ENCODE measurements at regions of chr9 and their contacts with region 1.

Region 1: DNA sequence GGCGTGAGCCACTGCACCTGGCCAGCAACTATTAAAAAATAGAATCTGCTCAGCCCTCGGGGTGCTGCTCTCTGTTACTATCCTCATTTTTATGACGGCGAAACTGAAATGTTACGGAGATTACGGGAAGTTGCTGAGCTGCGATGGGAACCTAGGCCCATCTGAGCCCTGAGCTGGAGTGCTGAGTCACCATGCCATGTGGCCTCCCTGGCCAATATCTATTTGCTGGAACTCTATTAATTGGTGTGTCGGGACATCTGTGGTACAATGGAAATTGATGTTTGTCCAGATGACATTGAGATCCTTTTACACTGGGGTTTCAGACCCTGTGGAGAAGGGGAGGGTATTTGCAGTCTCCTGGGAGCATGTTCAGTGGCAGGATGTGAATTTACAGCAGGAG is 8.1 kb downstream of the PRDM12 start:
- DNase-seq: no peak
- H3K4me3 ChIP-seq: no peak overlapping the region
- H3K27ac ChIP-seq: no peak overlapping the region
- H3K4me1 ChIP-seq: no peaks in the 10 kb centered on the region
- H3K27me3 ChIP-seq: peaks cover 9% of the 10 kb centered on the region
- CTCF ChIP-seq: no peak

Region 2: DNA sequence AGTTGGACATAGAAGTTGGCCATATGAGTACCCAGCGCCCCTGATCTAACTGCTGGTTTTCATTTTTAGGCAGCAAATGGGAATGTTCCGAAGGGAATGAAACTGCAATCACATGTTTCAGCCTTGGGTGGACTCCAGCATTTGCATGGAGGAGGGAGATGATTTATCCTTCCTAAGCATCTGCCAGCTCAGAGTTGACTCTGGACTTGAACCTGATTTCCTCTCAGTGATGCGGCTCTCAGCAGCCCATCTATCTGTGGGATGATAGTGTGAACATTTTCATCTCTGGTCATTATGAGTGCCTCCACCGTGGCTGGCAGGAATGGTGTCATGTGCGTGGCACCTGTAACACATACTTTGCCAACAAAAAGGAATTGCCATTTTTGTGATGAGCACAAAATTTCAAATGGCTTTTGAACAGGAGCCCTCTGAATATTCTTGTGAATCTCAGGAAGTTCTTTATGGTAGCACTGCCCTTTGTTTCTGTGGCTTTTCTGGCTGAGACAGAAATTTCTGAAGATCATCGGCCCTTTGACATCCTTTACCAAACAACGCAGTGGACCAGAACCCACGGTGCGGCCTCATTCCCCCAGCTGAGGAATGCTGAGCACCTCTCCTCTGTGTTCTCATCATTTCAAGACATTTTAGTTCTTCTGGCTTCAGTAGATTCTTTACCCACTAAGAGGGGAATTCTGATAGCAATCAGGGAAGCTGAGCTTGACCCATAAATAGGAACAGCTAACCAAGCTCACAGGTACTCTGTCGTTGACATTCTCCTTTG is 64.6 kb before region 1 on chr9:
- CTCF ChIA-PET with region 1: no interaction called
- POLR2A ChIA-PET with region 1: interaction called, 12 read pairs
- intact Hi-C with region 1: no loop called
- DNase-seq: no peak
- H3K4me3 ChIP-seq: no peak overlapping the region
- H3K27ac ChIP-seq: no peak overlapping the region
- H3K4me1 ChIP-seq: no peaks in the 10 kb centered on the region
- H3K27me3 ChIP-seq: no peaks in the 10 kb centered on the region
- CTCF ChIP-seq: no peak

Measured in A673 (cell line).